Tibial artery (tissue), 4 donors: ENCODE measurements at regions of chr9 and their contacts with region 1.

Region 1: DNA sequence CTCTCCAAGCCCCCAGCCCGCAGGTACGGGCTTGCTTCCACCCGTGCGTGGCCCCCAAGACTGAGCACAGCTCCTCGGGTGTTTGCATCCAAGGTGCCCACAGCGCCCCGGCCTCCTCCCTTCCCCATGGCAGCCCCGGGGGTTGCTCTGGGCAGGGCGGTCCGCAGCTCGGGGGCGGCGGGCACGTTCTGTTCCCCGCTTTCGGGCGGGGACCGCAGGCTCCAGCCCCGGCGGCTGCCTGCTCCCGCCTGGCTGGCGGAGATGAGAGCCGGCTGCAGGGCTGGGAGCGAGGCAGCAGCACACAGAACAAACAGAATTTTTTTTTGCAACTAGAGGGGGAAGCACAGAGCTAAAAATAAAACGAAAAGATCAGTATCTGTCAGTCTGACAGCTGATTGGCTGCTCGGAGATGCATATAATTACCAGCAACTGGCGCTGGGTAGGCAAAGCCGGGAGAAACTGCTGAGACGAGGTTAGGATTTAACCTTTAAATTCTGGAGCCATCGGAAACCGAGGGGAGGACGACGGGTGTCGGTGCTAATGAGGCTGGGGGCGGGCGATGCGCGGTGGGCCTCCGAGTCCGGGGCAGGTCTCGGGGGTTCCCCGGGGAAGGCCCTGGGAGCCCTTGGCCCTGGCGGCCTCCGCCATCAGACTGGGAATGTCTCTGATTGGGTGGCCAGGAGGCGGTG is 142.7 kb upstream of the IER5L start:
- DNase-seq: peak; percentile 82 to 88
- H3K4me3 ChIP-seq: peak overlapping the region; percentile 49 to 56
- H3K27ac ChIP-seq: peak overlapping the region; percentile 90 to 93
- H3K4me1 ChIP-seq: peaks cover 13 to 90% (median 82%) of the 10 kb centered on the region in 4 donors
- H3K27me3 ChIP-seq: no peaks in the 10 kb centered on the region
- CTCF ChIP-seq: no peak

Region 2: DNA sequence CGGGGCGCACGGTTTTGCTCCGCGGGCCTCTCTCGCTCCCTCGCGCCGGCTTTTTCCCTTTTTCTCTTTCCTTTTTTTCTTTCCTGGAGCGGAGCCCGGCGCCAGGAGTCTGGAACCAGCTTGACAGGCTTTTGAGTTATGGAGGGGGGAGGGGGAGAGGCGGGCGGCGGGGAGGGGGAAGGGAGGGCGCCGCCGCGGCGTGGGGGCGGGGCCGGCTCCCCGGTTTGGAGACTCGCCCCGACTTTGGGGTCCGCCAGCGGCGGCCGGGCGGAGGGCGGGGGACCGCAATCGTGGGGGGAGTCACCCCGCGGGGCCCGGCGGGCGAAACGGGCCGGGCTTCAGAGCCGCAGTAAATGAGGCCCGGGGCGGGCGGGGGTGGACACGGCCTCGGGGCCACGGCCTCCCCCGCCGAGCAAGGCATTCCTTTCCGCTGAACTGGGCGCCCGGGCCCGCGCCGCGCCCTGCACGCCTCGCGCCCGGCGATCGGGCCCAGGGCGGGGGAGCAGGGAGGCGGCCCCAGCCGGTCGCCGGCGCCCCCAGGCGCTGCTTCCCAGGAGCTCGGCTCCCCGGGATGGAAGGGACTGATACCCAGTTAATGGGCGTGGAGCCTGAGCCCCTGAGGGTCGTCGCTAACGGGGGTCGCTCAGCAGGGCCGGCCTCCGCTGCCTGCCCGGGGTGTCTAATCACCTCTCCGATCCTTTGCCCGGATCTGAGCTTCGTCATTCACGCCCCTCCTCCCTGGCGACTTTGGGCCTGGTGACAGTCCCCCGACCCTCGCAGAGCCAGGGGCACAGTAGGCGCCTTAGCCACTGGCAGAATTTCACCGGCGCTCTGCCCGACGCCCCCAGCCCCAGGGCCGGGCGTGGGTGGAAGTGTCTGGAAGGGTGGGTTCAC is 162.0 kb after region 1 on chr9:
- intact Hi-C with region 1: loop called (anchors 5 kb)
- DNase-seq: peak; percentile 94 to 96
- H3K4me3 ChIP-seq: peak overlapping the region; percentile 53 to 63
- H3K27ac ChIP-seq: peak overlapping the region; percentile 100
- H3K4me1 ChIP-seq: peaks cover 0 to 80% (median 71%) of the 10 kb centered on the region in 4 donors
- H3K27me3 ChIP-seq: no peaks in the 10 kb centered on the region
- CTCF ChIP-seq: peak in 1 of 2 experiments; percentile 8